Aorta (tissue), 5 donors: ENCODE measurements at regions of chr18 and their contacts with region 1.

Region 1: DNA sequence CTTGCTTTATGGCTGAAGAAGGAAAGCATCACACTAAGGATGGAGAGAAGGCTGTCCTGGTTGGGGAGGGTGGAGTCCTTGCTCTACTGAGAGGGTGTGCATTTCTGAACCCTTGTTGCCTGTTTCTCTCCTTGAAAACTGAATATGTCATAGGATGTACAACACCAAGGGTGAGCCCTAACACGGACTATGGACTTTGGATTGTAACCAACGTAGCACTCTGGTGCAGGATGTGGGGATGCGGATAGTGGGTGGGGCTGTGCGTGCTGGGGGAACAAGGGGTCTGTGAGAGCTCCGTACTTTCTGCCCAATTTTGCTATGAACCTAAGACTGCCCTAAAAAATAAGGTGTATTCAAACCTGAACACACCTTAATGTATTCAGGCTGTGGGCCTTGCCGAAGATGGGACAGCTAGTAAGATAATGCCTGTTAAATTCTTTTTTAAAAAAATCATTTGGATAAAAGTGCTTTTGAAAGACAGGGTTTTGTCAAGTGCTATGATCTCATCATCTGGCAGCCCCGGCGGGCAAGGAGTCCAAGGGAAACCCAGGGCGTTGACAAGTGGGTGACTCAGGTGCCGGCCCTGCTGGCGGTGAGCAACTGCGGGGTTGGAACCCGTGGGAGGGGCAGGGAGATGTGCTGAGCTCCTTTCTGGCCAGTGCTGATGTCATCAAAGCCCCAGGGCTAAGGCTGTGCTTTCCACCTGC is 54.0 kb downstream of the GATA6 start:
- DNase-seq: peak; percentile 89 to 97
- ATAC-seq: peak; percentile 77
- H3K4me3 ChIP-seq: no peak overlapping the region
- H3K27ac ChIP-seq: no peak overlapping the region
- H3K4me1 ChIP-seq: no peaks in the 10 kb centered on the region
- H3K27me3 ChIP-seq: no peaks in the 10 kb centered on the region

Region 2: GRCh38 chr18:22282311-22283112 is 59.1 kb after region 1 on chr18:
- intact Hi-C with region 1: loop called in 1 of 2 experiments (anchors 10 kb)
- DNase-seq: no peak
- ATAC-seq: peak; percentile 36
- H3K4me3 ChIP-seq: no peak overlapping the region
- H3K27ac ChIP-seq: no peak overlapping the region
- H3K4me1 ChIP-seq: no peaks in the 10 kb centered on the region
- H3K27me3 ChIP-seq: no peaks in the 10 kb centered on the region